Activated CD4-positive, alpha-beta T cell treated with anti-CD3 and anti-CD28 coated beads, Interleukin-2, amount 10 ng/mL, durations not matched to agents 24 days and 14 days (primary cell): ENCODE measurements at regions of chr5 and their contacts with region 1.

Region 1: DNA sequence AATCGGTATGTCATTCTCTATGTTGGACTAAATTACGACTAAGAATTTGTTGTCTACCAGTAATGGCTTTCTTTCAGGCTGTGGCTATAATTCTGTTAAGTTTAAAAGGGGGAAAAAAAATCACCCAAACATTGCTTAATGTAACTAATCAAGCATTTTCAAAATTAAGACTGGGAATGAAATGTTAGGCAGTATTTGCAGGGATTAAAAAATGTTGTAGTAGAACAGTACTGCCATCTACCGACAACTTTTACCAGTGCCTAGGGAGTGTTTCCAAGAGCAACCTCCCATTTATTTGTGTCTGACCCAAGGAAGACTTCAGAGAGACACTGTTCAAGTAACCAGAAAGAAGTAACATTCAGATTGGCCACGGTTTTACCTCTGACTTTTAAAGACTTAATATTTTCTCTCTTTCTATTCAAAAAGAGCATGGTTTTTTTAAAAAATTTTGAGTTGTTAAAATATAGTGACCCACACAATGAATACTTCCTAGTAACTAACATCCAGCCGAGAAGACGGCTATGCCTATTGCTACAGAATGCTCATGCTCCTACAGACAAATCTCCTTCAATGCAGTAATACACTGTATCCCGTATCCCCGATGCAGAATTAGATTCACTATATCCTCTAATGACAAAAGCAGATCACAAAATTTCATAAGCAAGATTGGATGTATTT is 92.4 kb downstream of the ARL15 start:
- DNase-seq: peak; percentile 74
- H3K4me3 Mint-ChIP-seq: no peak overlapping the region
- H3K27ac Mint-ChIP-seq: no peak overlapping the region
- H3K4me1 Mint-ChIP-seq: peaks cover 2% of the 10 kb centered on the region
- H3K27me3 Mint-ChIP-seq: peaks cover 2% of the 10 kb centered on the region

Region 2: DNA sequence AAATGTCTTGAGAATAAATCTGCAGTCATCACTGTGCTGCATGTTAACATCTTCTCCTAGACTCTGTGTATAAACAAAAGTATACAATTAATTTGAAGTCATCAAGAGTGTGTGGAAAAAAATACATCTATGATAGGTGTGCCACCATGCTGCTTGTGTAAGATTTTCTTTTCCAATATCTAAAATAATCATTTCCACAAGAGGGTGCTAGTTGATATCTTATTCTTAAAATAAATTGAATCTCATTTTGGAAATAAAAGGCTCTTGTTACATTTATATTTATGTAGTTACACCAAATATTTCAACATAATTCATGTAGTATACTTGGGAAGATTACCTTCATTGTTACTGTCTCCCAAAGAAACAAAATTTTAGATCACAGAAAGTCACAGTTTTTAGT is 1094.3 kb before region 1 on chr5:
- intact Hi-C with region 1: loop called (anchors 5 kb)
- DNase-seq: no peak
- H3K4me3 Mint-ChIP-seq: no peak overlapping the region
- H3K27ac Mint-ChIP-seq: no peak overlapping the region
- H3K4me1 Mint-ChIP-seq: peaks cover 7% of the 10 kb centered on the region
- H3K27me3 Mint-ChIP-seq: peaks cover 8% of the 10 kb centered on the region

Region 3: DNA sequence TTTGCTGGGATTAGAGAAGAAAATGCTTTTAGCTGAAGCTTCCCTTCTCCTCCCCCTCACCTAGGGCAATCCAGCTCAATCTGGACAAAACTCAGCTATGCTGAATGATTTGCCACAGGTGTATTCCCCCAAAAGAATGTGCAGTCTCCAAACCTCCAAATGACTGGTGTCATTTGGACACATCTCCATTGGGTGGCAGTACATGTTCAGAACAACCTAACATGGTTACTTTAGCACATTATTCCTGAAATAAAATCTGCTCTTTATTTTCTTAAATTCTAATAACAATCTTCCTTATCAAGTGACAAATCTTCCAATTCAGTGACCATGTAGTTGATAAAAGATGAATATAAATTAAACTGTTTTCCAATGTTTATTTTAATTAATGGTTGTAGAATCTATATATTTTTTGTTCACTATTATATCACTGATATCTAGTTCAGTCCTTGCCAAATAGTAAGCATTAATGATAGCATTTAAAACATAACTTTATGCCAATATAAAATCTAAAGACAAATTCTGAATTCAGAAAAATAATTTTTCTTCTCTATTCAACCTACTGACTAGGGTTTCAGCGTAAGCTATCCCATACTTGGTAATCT is 1047.1 kb before region 1 on chr5:
- intact Hi-C with region 1: loop called (anchors 2 kb)
- DNase-seq: no peak
- H3K4me3 Mint-ChIP-seq: no peak overlapping the region
- H3K27ac Mint-ChIP-seq: no peak overlapping the region
- H3K4me1 Mint-ChIP-seq: no peaks in the 10 kb centered on the region
- H3K27me3 Mint-ChIP-seq: peaks cover 13% of the 10 kb centered on the region

Region 4: DNA sequence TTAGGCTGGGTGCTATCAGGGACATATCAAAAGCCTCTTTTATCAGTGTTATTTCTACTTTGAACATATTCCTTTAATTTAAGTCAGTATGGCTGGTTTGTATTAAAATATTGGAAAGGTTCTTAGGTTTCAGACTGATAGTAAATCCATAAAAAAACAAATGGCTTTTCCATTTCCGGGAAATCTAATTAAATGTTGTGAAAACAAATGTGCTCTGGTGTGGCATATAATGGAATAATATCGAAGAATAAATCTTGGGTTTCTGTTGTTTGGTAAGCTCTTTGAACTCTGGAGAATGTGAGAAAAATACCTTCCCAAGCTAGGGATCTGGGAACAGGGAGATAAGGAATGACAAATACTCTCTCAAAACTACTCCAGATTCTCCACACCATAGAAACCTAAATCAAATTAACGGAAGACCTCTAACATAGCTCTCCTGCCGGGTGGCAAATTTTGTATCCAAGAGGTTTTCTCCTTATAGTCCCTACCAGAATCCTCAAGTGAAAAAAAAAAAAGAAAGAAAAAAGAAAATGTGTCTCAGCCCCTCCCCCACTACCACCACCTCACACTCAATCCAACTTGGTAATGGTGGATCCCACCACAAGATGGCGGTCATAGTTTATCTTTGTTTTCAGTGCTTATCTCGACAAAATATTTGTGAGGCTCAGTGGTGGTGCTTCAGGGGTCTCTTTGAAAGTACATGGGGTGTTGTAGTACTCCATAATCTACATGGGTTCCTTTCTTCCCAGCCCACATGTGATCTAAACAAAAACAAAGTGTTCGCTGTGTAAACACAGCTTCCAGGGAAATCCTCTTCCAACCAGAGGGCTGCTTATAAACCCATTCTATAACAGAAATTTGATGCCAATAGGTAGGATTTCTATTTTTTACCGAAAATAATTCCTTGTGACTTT is 792.1 kb before region 1 on chr5:
- intact Hi-C with region 1: loop called (anchors 5 kb)
- DNase-seq: peak; percentile 70
- H3K4me3 Mint-ChIP-seq: no peak overlapping the region
- H3K27ac Mint-ChIP-seq: no peak overlapping the region
- H3K4me1 Mint-ChIP-seq: no peaks in the 10 kb centered on the region
- H3K27me3 Mint-ChIP-seq: peaks cover 25% of the 10 kb centered on the region